Activated CD4-positive, alpha-beta T cell treated with anti-CD3 and anti-CD28 coated beads for 36 hours (primary cell): ENCODE measurements at regions of chr7 and their contacts with region 1.

Region 1: DNA sequence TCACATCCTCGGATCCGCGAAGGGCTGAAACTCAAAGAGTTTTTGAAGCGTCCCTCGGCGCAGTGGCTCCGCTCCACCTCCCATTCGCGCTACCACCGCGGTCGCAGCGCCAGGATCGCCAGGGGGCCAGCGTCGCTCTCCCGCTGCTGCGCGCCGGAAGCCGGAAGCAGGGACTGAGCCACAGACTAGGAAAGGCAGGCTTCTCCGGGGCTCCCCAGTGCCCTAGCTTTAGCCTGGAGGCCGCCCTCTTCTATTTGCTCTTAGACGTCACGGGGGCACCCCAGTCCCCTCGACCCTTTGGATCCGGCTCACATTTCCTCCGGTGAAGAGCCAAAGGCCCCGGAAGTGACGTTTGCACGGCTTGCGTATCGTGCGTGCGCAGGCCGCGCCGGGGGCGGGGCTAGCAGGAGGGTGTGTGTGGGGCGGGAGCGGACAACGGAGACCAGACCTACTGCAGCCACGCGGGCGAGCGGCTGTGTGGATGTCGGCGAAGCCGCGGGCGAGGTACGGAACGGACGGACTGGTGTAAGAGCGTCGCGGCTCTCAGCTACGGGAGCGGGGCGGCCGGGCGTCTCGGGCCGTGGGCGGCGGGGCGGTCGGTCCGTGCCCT is 25.5 kb downstream of the KCTD7 start:
- DNase-seq: peak; percentile 100
- ATAC-seq: peak; percentile 94
- H3K4me3 Mint-ChIP-seq: peak overlapping the region; percentile 100
- H3K27ac Mint-ChIP-seq: peak overlapping the region; percentile 98
- H3K4me1 Mint-ChIP-seq: peaks cover 32% of the 10 kb centered on the region
- H3K27me3 Mint-ChIP-seq: no peaks in the 10 kb centered on the region

Region 2: GRCh38 chr7:65981965-65982792 is 672.0 kb before region 1 on chr7 and contains the start of gene GUSB:
- CTCF ChIA-PET with region 1: no interaction called
- POLR2A ChIA-PET with region 1: no interaction called
- intact Hi-C with region 1: loop called in 1 of 2 experiments (anchors 1 kb)
- DNase-seq: peak; percentile 95
- ATAC-seq: peak; percentile 90
- H3K4me3 Mint-ChIP-seq: peak within 1 kb of the TSS; percentile 80
- H3K27ac Mint-ChIP-seq: peak within 1 kb of the TSS; percentile 90
- H3K4me1 Mint-ChIP-seq: peaks cover 8% of the 10 kb centered on the region
- H3K27me3 Mint-ChIP-seq: no peaks in the 10 kb centered on the region
- total RNA-seq, gene GUSB: 41.8 to 43.2 TPM

Region 3: DNA sequence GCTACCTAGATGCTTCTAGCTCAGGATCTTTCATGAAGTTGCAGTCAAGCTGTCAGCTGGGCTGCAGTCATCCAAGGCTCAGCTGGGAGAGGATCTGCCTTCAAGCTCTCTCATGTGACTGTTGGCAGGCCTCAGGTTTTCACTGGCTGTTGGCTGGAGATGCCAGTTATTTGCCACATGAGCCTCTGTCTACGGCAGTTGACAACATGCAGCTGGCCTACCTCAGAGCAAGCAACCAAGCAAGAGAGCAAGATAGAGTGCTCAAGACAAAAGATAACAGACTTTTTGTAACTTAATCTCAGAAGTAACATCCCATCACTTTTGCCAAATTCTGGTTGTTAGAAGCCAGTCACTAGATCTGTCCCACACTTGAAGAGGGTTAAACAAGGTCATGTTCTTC is 323.3 kb before region 1 on chr7:
- CTCF ChIA-PET with region 1: no interaction called
- POLR2A ChIA-PET with region 1: no interaction called
- intact Hi-C with region 1: no loop called
- DNase-seq: no peak
- ATAC-seq: no peak
- H3K4me3 Mint-ChIP-seq: no peak overlapping the region
- H3K27ac Mint-ChIP-seq: no peak overlapping the region
- H3K4me1 Mint-ChIP-seq: no peaks in the 10 kb centered on the region
- H3K27me3 Mint-ChIP-seq: peaks cover 2% of the 10 kb centered on the region

Region 4: DNA sequence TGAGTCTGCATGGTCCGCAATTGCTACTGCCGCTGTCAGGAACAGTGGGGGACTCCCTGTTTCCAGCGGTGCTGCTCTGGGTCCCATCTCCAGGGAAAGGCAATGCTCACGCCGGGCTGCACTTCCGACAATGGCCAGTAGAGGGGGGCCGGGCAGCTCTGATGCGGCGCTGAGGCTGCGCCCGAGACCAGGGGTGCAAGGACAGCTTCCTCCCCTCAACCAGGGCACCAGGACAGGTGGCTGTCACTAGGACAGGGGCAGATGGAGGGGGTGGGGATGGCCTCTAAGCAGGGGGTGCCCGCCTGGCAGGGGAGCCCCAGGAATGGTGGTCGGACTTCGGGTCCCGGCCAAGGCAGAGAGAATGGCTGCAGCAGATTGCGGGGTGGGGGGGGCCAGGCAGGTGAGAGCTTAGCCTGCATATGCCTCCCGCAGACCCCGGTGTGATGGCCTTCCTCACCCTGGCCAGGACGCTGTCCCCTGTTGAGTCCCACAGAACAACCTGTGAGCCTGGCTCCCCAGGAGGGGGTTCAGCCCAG is 96.6 kb before region 1 on chr7:
- CTCF ChIA-PET with region 1: interaction called, 3 read pairs
- POLR2A ChIA-PET with region 1: interaction called, 3 read pairs
- intact Hi-C with region 1: loop called (anchors 1 to 10 kb)
- DNase-seq: peak; percentile 84
- ATAC-seq: peak; percentile 90
- H3K4me3 Mint-ChIP-seq: no peak overlapping the region
- H3K27ac Mint-ChIP-seq: no peak overlapping the region
- H3K4me1 Mint-ChIP-seq: no peaks in the 10 kb centered on the region
- H3K27me3 Mint-ChIP-seq: no peaks in the 10 kb centered on the region

Region 5: DNA sequence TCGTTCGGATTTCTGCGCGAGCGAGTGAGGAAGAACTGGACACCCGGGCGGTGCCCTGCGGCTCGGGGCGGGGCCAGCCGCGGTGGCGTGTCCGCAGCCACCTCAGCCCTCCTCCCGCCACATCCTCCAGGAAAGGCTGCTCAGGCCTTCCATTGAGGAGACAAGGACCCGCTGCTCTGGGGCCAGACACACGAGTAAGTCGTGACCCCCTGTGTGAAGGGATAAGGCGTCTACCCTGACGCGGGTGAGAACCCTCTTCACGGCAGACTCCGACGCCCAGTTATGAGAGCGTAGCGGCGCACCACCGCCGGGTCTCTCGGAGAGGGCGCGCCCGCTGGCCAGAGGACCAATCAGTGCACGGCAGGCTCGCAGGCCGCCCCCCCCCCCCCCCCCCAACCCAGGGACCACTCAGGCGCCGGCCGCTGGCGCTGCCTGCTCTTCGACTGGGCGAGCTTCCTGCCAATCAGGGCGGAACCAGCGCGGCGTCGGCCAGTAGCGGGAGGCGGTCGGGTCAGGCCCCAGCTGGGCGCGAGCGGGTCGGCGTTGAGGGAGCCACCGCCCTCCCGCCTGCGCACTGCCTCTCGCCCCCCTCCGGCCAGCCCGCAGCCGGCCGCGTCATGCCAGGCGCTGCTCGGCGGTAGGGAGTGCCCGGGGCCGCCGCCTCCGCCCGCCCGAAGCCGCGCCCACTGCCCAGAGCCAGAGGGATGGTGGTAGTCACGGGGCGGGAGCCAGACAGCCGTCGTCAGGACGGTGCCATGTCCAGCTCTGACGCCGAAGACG is 25.7 kb before region 1 on chr7 and contains the start of gene KCTD7:
- CTCF ChIA-PET with region 1: no interaction called
- POLR2A ChIA-PET with region 1: interaction called, 5 read pairs
- intact Hi-C with region 1: loop called (anchors 1 kb)
- DNase-seq: peak; percentile 98
- ATAC-seq: peak; percentile 94
- H3K4me3 Mint-ChIP-seq: peak within 1 kb of the TSS; percentile 82
- H3K27ac Mint-ChIP-seq: peak within 1 kb of the TSS; percentile 86
- H3K4me1 Mint-ChIP-seq: peaks cover 45% of the 10 kb centered on the region
- H3K27me3 Mint-ChIP-seq: peaks cover 2% of the 10 kb centered on the region
- total RNA-seq, gene KCTD7: 7.8 TPM

Region 6: DNA sequence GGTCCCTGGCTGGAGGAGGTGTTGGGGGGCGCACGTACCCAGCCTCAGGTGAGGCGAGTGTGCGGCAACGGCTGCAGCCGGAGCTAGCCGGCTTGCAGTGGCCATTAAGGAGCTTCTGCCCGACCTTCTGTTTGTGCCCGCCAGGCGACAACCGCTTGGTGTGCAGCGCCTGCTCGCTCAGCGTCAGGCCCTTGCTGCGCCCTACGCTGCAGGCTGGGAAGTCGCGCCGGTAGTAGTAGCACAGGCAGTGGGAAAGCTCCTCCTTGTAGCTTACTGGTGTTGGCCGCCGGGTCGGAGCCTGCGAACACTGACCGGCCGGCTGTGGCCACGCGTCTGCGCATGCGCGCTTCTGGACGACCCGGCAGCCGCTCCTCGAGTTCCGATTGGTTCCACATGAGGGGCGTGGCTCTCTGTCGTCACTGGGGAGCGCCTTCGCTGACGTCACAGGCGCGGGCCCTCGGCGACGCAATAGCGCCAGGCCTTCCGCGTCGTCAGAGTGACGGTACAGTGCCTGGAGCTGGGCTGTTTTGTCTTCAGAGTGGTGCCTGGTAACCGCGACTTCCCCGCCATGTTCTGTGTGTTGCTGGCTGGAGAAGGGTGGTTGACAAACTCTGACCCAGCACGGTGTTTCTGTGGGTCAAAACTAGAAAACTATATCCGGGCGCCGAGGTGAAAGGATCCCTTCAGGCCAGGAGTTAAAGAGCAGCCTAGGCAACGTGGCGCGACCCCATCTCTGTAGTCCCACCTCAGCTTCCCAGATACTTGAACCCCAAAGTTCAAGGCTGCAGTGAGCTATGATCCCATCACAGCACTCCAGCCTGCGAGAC is 190.5 kb after region 1 on chr7:
- CTCF ChIA-PET with region 1: interaction called, 3 read pairs
- POLR2A ChIA-PET with region 1: interaction called, 5 read pairs
- intact Hi-C with region 1: loop called in 1 of 2 experiments (anchors 1 kb)
- DNase-seq: peak; percentile 99
- ATAC-seq: peak; percentile 94
- H3K4me3 Mint-ChIP-seq: peak overlapping the region; percentile 95
- H3K27ac Mint-ChIP-seq: peak overlapping the region; percentile 99
- H3K4me1 Mint-ChIP-seq: peaks cover 24% of the 10 kb centered on the region
- H3K27me3 Mint-ChIP-seq: no peaks in the 10 kb centered on the region